Sigmoid colon (tissue), 7 donors: ENCODE measurements at regions of chr14 and their contacts with region 1.

Region 1: GRCh38 chr14:65412032-65412846 is at the start of gene FUT8:
- DNase-seq: peak; percentile 98
- H3K4me3 ChIP-seq: peak within 1 kb of the TSS; percentile 66 to 93 (median 84)
- H3K27ac ChIP-seq: peak within 1 kb of the TSS; percentile 92 to 96 (median 94)
- H3K4me1 ChIP-seq: peaks cover 0 to 21% (median 10%) of the 10 kb centered on the region in 4 donors
- H3K27me3 ChIP-seq: no peaks in the 10 kb centered on the region
- CTCF ChIP-seq: peak; percentile 38 to 56 (median 42)
- EP300 ChIP-seq: peak in 1 of 4 donors; percentile 8
- POLR2A ChIP-seq: peak in 1 of 2 donors; percentile 31
- total RNA-seq, gene FUT8: 22.0 to 53.9 (median 33.0) TPM

Region 2: GRCh38 chr14:64914237-64914971 is 497.8 kb before region 1 on chr14 and contains the start of gene CHURC1:
- intact Hi-C with region 1: loop called (anchors 5 kb)
- DNase-seq: peak; percentile 99
- H3K4me3 ChIP-seq: peak within 1 kb of the TSS; percentile 65 to 94 (median 92)
- H3K27ac ChIP-seq: peak within 1 kb of the TSS; percentile 86 to 98 (median 94)
- H3K4me1 ChIP-seq: peaks cover 0 to 38% (median 30%) of the 10 kb centered on the region in 4 donors
- H3K27me3 ChIP-seq: no peaks in the 10 kb centered on the region
- CTCF ChIP-seq: no peak
- EP300 ChIP-seq: no peak
- POLR2A ChIP-seq: peak; percentile 71 to 84
- total RNA-seq, gene CHURC1: 110 to 161 (median 142) TPM

Region 3: GRCh38 chr14:65102441-65103149 is 309.6 kb before region 1 on chr14 and contains the start of gene MAX:
- intact Hi-C with region 1: loop called (anchors 5 kb)
- DNase-seq: peak; percentile 99
- H3K4me3 ChIP-seq: peak within 1 kb of the TSS; percentile 68 to 95 (median 94)
- H3K27ac ChIP-seq: peak within 1 kb of the TSS; percentile 86 to 96 (median 90)
- H3K4me1 ChIP-seq: peaks cover 0 to 48% (median 39%) of the 10 kb centered on the region in 4 donors
- H3K27me3 ChIP-seq: no peaks in the 10 kb centered on the region
- CTCF ChIP-seq: no peak
- EP300 ChIP-seq: no peak
- POLR2A ChIP-seq: peak; percentile 82 to 87
- total RNA-seq, gene MAX: 61.6 to 71.7 (median 65.0) TPM

Region 4: GRCh38 chr14:65222440-65222858 is 189.8 kb before region 1 on chr14:
- intact Hi-C with region 1: loop called (anchors 5 kb)
- DNase-seq: no peak
- H3K4me3 ChIP-seq: no peak overlapping the region
- H3K27ac ChIP-seq: no peak overlapping the region
- H3K4me1 ChIP-seq: no peaks in the 10 kb centered on the region
- H3K27me3 ChIP-seq: no peaks in the 10 kb centered on the region
- CTCF ChIP-seq: peak in 3 of 4 experiments; percentile 52 to 62 (median 53)
- EP300 ChIP-seq: no peak
- POLR2A ChIP-seq: no peak

Region 5: GRCh38 chr14:65297744-65298143 is 114.5 kb before region 1 on chr14:
- intact Hi-C with region 1: no loop called
- DNase-seq: no peak
- H3K4me3 ChIP-seq: no peak overlapping the region
- H3K27ac ChIP-seq: no peak overlapping the region
- H3K4me1 ChIP-seq: no peaks in the 10 kb centered on the region
- H3K27me3 ChIP-seq: no peaks in the 10 kb centered on the region
- CTCF ChIP-seq: no peak
- EP300 ChIP-seq: no peak
- POLR2A ChIP-seq: no peak

Region 6: GRCh38 chr14:65824285-65824977 is 412.2 kb after region 1 on chr14:
- intact Hi-C with region 1: loop called (anchors 1 kb)
- DNase-seq: no peak
- H3K4me3 ChIP-seq: no peak overlapping the region
- H3K27ac ChIP-seq: no peak overlapping the region
- H3K4me1 ChIP-seq: no peaks in the 10 kb centered on the region
- H3K27me3 ChIP-seq: peaks cover 0 to 5% (median 0%) of the 10 kb centered on the region in 3 donors
- CTCF ChIP-seq: peak; percentile 77 to 92 (median 87)
- EP300 ChIP-seq: no peak
- POLR2A ChIP-seq: no peak

Region 7: GRCh38 chr14:66507722-66508546 is 1095.7 kb after region 1 on chr14 and contains the start of gene GPHN:
- intact Hi-C with region 1: loop called (anchors 5 kb)
- DNase-seq: peak; percentile 98
- H3K4me3 ChIP-seq: peak within 1 kb of the TSS; percentile 52 to 97 (median 82)
- H3K27ac ChIP-seq: peak within 1 kb of the TSS; percentile 91 to 96 (median 93)
- H3K4me1 ChIP-seq: peaks cover 0 to 19% (median 12%) of the 10 kb centered on the region in 4 donors
- H3K27me3 ChIP-seq: no peaks in the 10 kb centered on the region
- CTCF ChIP-seq: peak in 1 of 4 experiments; percentile 20
- EP300 ChIP-seq: no peak
- POLR2A ChIP-seq: peak; percentile 50 to 73
- total RNA-seq, gene GPHN: 13.4 to 20.3 (median 14.9) TPM